ENCODE measurements at regions of chr10 and their contacts with region 1.

Region 1: GRCh38 chr10:91163269-91163868 is 57.1 kb upstream of the PCGF5 start:
- DNase-seq: peak; percentile 61 to 87
- H3K4me3 ChIP-seq: peak overlapping the region; percentile 57 to 92 (median 84)
- H3K27ac ChIP-seq: peak overlapping the region; percentile 95 to 99 (median 97)
- H3K4me1 ChIP-seq: peaks cover 7 to 39% (median 28%) of the 10 kb centered on the region in 4 donors
- H3K27me3 ChIP-seq: no peaks in the 10 kb centered on the region
- CTCF ChIP-seq: no peak
- EP300 ChIP-seq: no peak
- POLR2A ChIP-seq: no peak

Region 2: GRCh38 chr10:91220194-91220953 is 57.0 kb after region 1 on chr10 and contains the start of gene PCGF5:
- intact Hi-C with region 1: loop called (anchors 10 kb)
- DNase-seq: peak; percentile 95 to 97
- H3K4me3 ChIP-seq: peak within 1 kb of the TSS; percentile 77 to 93 (median 90)
- H3K27ac ChIP-seq: peak within 1 kb of the TSS; percentile 93 to 98 (median 95)
- H3K4me1 ChIP-seq: peaks cover 20 to 52% (median 35%) of the 10 kb centered on the region in 4 donors
- H3K27me3 ChIP-seq: no peaks in the 10 kb centered on the region
- CTCF ChIP-seq: peak in 4 of 7 experiments; percentile 21 to 68 (median 38)
- EP300 ChIP-seq: no peak
- POLR2A ChIP-seq: peak in 1 of 4 donors; percentile 69
- total RNA-seq, gene PCGF5: 10.7 to 78.2 (median 57.6) TPM

Region 3: GRCh38 chr10:92350411-92350810 is 1187.0 kb after region 1 on chr10:
- intact Hi-C with region 1: no loop called
- DNase-seq: no peak
- H3K4me3 ChIP-seq: no peak overlapping the region
- H3K27ac ChIP-seq: no peak overlapping the region
- H3K4me1 ChIP-seq: no peaks in the 10 kb centered on the region
- H3K27me3 ChIP-seq: no peaks in the 10 kb centered on the region
- CTCF ChIP-seq: no peak
- EP300 ChIP-seq: no peak
- POLR2A ChIP-seq: no peak